AG04450 (cell line): ENCODE measurements at regions of chr5 and their contacts with region 1.

Region 1: GRCh38 chr5:98839469-98840383 is 66.3 kb downstream of the RGMB start:
- DNase-seq: no peak
- H3K4me3 ChIP-seq: no peak overlapping the region
- H3K27ac ChIP-seq: no peak overlapping the region
- H3K27me3 ChIP-seq: no peaks in the 10 kb centered on the region
- CTCF ChIP-seq: peak; percentile 34; the same call in 1 of the 2 replicates

Region 2: DNA sequence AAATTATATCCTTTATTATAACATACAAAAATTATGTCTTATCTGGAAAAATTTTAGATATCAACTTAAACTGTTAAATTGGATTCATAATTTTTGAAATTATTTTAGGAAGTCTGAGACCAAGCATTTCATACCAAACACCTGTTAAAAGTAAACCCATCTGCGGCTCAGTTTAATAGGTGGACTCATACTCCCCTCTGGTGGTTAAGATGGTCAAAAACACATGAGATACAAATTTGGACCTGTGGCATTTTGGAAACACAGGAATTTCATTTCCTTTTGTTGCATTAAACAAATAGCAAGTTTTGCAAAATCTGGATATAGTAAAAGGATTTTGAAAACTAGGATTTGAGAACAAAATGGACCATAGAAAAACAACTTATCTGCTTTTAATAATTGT is 12.6 kb before region 1 on chr5:
- CTCF ChIA-PET with region 1: interaction called, 10 read pairs
- POLR2A ChIA-PET with region 1: no interaction called
- DNase-seq: peak; percentile 8
- H3K4me3 ChIP-seq: no peak overlapping the region
- H3K27ac ChIP-seq: no peak overlapping the region
- H3K27me3 ChIP-seq: no peaks in the 10 kb centered on the region
- CTCF ChIP-seq: peak; percentile 55

Region 3: DNA sequence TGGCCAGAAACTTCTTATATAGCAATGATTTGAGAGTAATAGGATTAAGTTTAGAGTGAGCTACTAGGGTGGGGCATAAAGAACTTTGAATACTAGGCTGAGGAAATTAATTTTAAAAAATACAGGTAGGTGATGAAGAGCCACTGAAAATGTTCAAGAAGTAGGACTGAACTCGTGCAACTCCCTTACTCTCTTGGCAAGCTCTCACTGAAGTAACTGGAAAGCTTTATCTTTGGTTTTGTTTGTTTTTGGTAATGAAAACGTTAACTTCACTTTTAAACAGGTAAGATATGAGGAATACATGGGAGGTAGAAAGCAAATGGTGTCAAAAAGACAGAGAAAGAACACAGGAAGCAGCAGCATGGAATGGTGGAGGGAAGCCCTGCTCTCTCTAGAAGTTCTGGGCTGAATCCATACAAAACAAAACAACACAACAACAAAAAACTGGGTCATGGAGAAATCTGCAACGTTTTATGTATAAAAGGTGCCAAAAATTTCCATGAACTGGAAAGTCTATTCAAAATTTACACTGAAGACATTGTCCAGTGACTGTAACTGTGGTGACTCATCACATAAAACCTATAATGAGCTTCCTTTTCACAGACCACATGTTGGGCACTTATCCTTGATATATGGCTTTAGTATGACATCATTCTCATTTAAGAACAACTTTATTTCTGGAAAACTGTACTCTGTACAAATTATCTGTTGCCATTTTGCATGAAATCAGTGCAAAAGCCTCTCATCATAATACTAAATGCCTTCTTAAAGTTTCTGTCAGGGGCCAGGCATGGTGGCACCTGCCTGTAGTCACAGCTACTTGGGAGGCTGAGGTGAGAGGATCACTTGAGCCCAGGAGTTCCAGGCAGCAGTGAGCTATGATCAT is 180.3 kb after region 1 on chr5:
- CTCF ChIA-PET with region 1: no interaction called
- POLR2A ChIA-PET with region 1: no interaction called
- DNase-seq: peak; percentile 39
- H3K4me3 ChIP-seq: no peak overlapping the region
- H3K27ac ChIP-seq: no peak overlapping the region
- H3K27me3 ChIP-seq: no peaks in the 10 kb centered on the region
- CTCF ChIP-seq: no peak

Region 4: DNA sequence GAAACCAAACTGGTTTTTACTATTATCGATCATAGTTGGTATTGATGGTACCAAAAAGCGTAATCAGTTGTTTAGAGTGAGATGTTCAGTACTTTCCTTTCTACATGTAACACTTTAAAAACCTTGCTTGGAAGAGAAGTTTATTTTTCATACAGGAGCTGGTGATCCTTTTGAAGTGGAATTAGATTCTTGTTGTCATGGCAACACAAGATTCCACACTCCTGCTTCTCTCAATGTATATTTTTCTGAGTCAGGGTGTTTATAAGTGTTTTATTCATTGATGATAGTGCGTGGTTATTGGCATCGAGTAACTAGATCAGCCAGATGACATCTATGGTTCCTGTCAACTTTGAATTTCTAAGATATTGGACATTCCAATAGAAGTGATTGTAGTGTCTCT is 270.2 kb after region 1 on chr5:
- CTCF ChIA-PET with region 1: no interaction called
- POLR2A ChIA-PET with region 1: no interaction called
- DNase-seq: no peak
- H3K4me3 ChIP-seq: no peak overlapping the region
- H3K27ac ChIP-seq: no peak overlapping the region
- H3K27me3 ChIP-seq: no peaks in the 10 kb centered on the region
- CTCF ChIP-seq: no peak